Activated B cell treated with CpG ODN at 0.5 μM for 24 hours (primary cell): ENCODE measurements at regions of chr1 and their contacts with region 1.

Region 1: GRCh38 chr1:9428601-9429341 is 110.5 kb upstream of the SLC25A33 start:
- DNase-seq: peak; percentile 100
- ATAC-seq: peak; percentile 78
- H3K4me3 Mint-ChIP-seq: peak overlapping the region; percentile 95
- H3K27ac Mint-ChIP-seq: peak overlapping the region; percentile 97
- H3K4me1 Mint-ChIP-seq: peaks cover 59% of the 10 kb centered on the region
- H3K27me3 Mint-ChIP-seq: no peaks in the 10 kb centered on the region
- CTCF ChIP-seq: no peak

Region 2: GRCh38 chr1:8878448-8879347 is 550.1 kb before region 1 on chr1 and contains the start of gene ENO1:
- CTCF ChIA-PET with region 1: no interaction called
- POLR2A ChIA-PET with region 1: interaction called, 3 read pairs
- intact Hi-C with region 1: loop called (anchors 2 kb)
- DNase-seq: peak; percentile 100
- ATAC-seq: peak; percentile 79
- H3K4me3 Mint-ChIP-seq: peak within 1 kb of the TSS; percentile 95
- H3K27ac Mint-ChIP-seq: peak within 1 kb of the TSS; percentile 96
- H3K4me1 Mint-ChIP-seq: peaks cover 45% of the 10 kb centered on the region
- H3K27me3 Mint-ChIP-seq: no peaks in the 10 kb centered on the region
- CTCF ChIP-seq: no peak
- total RNA-seq, gene ENO1: 837 and 886 TPM in 2 replicates

Region 3: GRCh38 chr1:9128520-9129265 is 300.1 kb before region 1 on chr1 and contains the start of gene GPR157:
- CTCF ChIA-PET with region 1: no interaction called
- POLR2A ChIA-PET with region 1: interaction called, 5 read pairs
- intact Hi-C with region 1: loop called (anchors 2 kb)
- DNase-seq: peak; percentile 75
- ATAC-seq: peak; percentile 87
- H3K4me3 Mint-ChIP-seq: peak within 1 kb of the TSS; percentile 90
- H3K27ac Mint-ChIP-seq: peak within 1 kb of the TSS; percentile 56
- H3K4me1 Mint-ChIP-seq: peaks cover 49% of the 10 kb centered on the region
- H3K27me3 Mint-ChIP-seq: no peaks in the 10 kb centered on the region
- CTCF ChIP-seq: no peak
- total RNA-seq, gene GPR157: 6.2 and 7.0 TPM in 2 replicates

Region 4: GRCh38 chr1:9362488-9362887 is 66.3 kb before region 1 on chr1:
- CTCF ChIA-PET with region 1: no interaction called
- POLR2A ChIA-PET with region 1: interaction called, 8 read pairs
- intact Hi-C with region 1: loop called (anchors 5 kb)
- DNase-seq: peak; percentile 25
- ATAC-seq: peak; percentile 68
- H3K4me3 Mint-ChIP-seq: peak overlapping the region; percentile 78
- H3K27ac Mint-ChIP-seq: no peak overlapping the region
- H3K4me1 Mint-ChIP-seq: peaks cover 22% of the 10 kb centered on the region
- H3K27me3 Mint-ChIP-seq: no peaks in the 10 kb centered on the region
- CTCF ChIP-seq: no peak

Region 5: DNA sequence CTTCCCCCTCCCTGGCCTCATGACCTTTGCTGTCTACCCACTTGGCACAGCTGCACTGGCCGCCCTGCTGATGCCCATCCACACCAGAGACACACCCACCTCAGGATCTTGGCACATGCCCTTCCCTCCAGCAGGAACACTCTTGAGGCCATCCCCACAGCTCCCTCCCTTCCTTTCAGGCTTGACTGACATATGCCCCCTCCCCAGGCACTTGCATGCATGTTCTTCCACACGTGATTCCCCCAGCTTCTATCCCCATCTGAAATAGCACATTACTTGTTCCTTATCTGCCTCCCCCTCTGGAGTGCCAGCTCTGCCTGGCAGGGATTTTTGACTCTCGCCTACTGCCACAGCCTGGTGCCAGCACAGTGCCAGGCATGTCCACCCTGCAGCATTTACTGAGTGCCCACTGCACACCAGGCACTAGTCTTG is 12.0 kb after region 1 on chr1:
- CTCF ChIA-PET with region 1: no interaction called
- POLR2A ChIA-PET with region 1: interaction called, 10 read pairs
- intact Hi-C with region 1: no loop called
- DNase-seq: no peak
- ATAC-seq: no peak
- H3K4me3 Mint-ChIP-seq: no peak overlapping the region
- H3K27ac Mint-ChIP-seq: no peak overlapping the region
- H3K4me1 Mint-ChIP-seq: no peaks in the 10 kb centered on the region
- H3K27me3 Mint-ChIP-seq: no peaks in the 10 kb centered on the region
- CTCF ChIP-seq: no peak

Region 6: GRCh38 chr1:9689011-9689706 is 260.4 kb after region 1 on chr1:
- CTCF ChIA-PET with region 1: no interaction called
- POLR2A ChIA-PET with region 1: interaction called, 11 read pairs
- intact Hi-C with region 1: no loop called
- DNase-seq: peak; percentile 80
- ATAC-seq: peak; percentile 78
- H3K4me3 Mint-ChIP-seq: peak overlapping the region; percentile 82
- H3K27ac Mint-ChIP-seq: peak overlapping the region; percentile 87
- H3K4me1 Mint-ChIP-seq: peaks cover 68% of the 10 kb centered on the region
- H3K27me3 Mint-ChIP-seq: no peaks in the 10 kb centered on the region
- CTCF ChIP-seq: no peak